Motor neuron (in vitro differentiated cells): ENCODE measurements at regions of chr6 and their contacts with region 1.

Region 1: DNA sequence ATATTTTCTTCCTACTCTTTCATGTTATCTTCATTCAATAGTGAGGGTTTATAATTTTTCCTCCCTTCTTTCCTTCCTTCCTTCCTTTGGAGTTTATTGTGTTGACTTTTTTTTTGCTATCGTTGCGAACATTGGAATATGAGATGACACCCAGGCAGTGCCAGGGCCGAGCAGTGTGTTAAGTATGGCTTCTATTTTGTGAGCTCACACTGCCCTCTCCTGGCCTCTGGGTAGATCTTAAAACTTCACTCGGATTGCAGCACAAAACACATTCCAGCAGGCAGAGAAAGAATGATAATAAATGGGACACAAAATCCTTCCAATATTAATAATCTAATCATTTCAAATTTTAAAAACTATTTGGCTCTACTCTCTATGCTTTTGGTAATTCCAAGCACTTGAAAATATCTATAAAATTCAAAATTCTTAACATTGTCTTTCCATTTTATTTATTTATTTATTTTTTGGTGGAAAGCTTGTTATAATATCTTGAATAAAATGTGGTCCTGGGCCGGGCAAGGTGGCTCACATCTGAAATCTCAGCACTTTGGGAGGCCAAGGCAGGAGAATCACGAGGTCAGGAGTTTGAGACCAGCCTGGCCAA is 147.4 kb upstream of the OLIG3 start:
- ATAC-seq: peak; percentile 83 to 94 (median 86)
- H3K4me3 ChIP-seq: no peak overlapping the region
- H3K27ac ChIP-seq: no peak overlapping the region
- H3K4me1 ChIP-seq: no peaks in the 10 kb centered on the region

Region 2: GRCh38 chr6:137076277-137077068 is 565.1 kb before region 1 on chr6:
- in situ Hi-C with region 1: loop called in 2 of 9 experiments (anchors 25 kb)
- ATAC-seq: peak; percentile 64 to 100 (median 88)
- H3K4me3 ChIP-seq: no peak overlapping the region
- H3K27ac ChIP-seq: no peak overlapping the region
- H3K4me1 ChIP-seq: no peaks in the 10 kb centered on the region

Region 3: DNA sequence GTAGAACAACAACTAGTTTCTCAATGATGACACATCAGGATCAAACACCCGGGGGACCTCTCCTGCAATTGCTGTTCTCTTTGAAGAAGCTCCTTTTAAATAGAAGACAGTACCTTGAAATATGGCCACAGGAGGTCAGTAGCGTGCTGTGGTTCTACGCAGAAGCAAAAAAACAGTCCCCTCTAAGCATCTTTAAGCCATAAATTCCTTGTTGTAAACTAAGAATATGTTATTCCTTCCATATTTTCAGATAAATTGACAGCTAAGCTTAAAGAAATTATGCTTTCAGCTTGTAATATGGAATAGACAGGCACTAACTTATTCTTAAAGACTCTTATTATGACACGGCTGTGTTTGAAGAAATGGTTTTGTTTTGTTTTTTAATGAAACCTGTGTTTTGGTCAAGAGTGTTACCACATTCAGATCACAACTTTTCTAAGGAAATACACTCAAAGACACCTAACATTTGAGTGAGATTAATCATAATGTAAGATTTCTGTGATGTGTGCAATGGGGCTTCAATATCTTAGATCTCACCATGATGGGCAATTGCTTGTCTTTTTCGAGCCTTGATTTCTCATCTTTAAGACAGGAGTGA is 547.1 kb before region 1 on chr6:
- in situ Hi-C with region 1: loop called in 3 of 9 experiments (anchors 10 to 25 kb)
- ATAC-seq: peak; percentile 58 to 77 (median 74)
- H3K4me3 ChIP-seq: no peak overlapping the region
- H3K27ac ChIP-seq: no peak overlapping the region
- H3K4me1 ChIP-seq: peaks cover 0 to 3% of the 10 kb centered on the region in 2 donors

Region 4: GRCh38 chr6:137102851-137103492 is 538.6 kb before region 1 on chr6:
- in situ Hi-C with region 1: loop called in 5 of 9 experiments (anchors 10 to 25 kb)
- ATAC-seq: no peak
- H3K4me3 ChIP-seq: no peak overlapping the region
- H3K27ac ChIP-seq: no peak overlapping the region
- H3K4me1 ChIP-seq: no peaks in the 10 kb centered on the region

Region 5: GRCh38 chr6:137261393-137262160 is 380.0 kb before region 1 on chr6:
- in situ Hi-C with region 1: loop called in 5 of 9 experiments (anchors 10 to 25 kb)
- ATAC-seq: peak in 1 of 8 experiments; percentile 26
- H3K4me3 ChIP-seq: no peak overlapping the region
- H3K27ac ChIP-seq: no peak overlapping the region
- H3K4me1 ChIP-seq: peaks cover 0 to 2% of the 10 kb centered on the region in 2 donors

Region 6: GRCh38 chr6:137271245-137272183 is 370.1 kb before region 1 on chr6:
- in situ Hi-C with region 1: loop called in 7 of 9 experiments (anchors 10 to 25 kb)
- ATAC-seq: peak in 6 of 8 experiments; percentile 39 to 76 (median 58)
- H3K4me3 ChIP-seq: no peak overlapping the region
- H3K27ac ChIP-seq: no peak overlapping the region
- H3K4me1 ChIP-seq: no peaks in the 10 kb centered on the region

Region 7: GRCh38 chr6:137291441-137291840 is 350.1 kb before region 1 on chr6:
- in situ Hi-C with region 1: loop called in 2 of 9 experiments (anchors 25 kb)
- ATAC-seq: peak in 1 of 8 experiments; percentile 32
- H3K4me3 ChIP-seq: no peak overlapping the region
- H3K27ac ChIP-seq: no peak overlapping the region
- H3K4me1 ChIP-seq: no peaks in the 10 kb centered on the region

Region 8: DNA sequence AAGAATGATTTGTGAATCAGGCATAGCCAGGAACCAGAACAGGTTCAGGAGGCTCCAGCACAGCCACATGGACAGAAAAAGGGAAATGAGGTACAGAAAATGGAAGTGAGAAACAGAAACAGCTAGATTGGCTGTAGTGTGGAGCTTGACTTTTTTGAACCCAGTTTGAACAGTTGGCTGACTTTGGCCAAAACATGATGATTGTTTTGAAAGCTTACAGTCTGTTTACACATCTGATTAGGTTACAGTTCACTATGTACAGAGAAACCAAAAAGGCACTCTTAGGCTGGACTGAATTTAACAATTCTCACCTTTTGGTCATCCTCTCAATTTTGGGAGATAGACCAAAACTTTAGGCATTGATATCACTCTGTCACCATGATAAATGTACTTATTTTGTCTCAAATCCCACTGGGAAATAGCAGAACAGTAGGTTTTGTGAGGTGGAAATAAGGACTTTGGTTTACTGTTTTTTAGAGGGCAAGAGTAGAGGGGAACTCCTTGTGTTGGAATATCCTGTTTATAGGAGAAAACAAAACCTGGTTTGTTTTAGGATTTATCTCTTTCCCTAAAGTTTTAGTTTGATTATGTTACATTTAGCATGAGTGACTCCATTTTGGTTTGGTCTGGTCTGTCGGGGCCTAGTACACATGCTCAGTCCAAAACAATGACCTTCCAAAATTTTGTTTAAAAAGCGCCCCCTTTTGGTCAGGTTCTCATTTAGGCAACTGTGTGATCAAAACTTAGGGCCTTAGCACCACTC is 270.5 kb before region 1 on chr6:
- in situ Hi-C with region 1: no loop called
- ATAC-seq: no peak
- H3K4me3 ChIP-seq: no peak overlapping the region
- H3K27ac ChIP-seq: no peak overlapping the region
- H3K4me1 ChIP-seq: peaks cover 11 to 13% of the 10 kb centered on the region in 2 donors

Region 9: DNA sequence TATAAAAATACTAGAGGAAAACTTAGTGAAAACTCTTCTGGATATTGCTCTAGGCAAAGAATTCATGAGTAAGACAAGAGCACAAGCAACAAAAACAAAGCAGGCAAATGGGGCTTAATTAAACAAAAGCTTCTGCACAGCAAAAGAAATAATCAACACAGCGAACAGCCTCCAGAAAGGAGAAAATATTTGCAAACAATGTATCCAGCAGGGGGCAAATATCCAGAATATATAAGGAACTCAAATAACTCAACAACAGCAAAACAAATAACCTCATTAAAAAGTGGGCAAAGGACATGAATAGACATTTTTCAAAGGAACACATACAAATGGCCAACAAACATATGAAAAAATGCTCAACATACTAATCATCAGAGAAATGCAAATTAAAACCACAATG is 1476.2 kb after region 1 on chr6:
- in situ Hi-C with region 1: no loop called
- ATAC-seq: no peak
- H3K4me3 ChIP-seq: no peak overlapping the region
- H3K27ac ChIP-seq: no peak overlapping the region
- H3K4me1 ChIP-seq: no peaks in the 10 kb centered on the region